HepG2 (cell line): ENCODE measurements at regions of chr15 and their contacts with region 1.

Region 1: GRCh38 chr15:98823012-98823458 is 174.7 kb downstream of the IGF1R start:
- DNase-seq: no peak
- ATAC-seq: no peak
- H3K4me3 ChIP-seq: no peak overlapping the region
- H3K27ac ChIP-seq: no peak overlapping the region
- H3K4me1 ChIP-seq: peaks cover 14% of the 10 kb centered on the region
- H3K27me3 ChIP-seq: no peaks in the 10 kb centered on the region
- CTCF ChIP-seq: no peak
- EP300 ChIP-seq: no peak
- POLR2A ChIP-seq: no peak
- RAD21 ChIP-seq: no peak

Region 2: GRCh38 chr15:98599909-98600691 is 222.9 kb before region 1 on chr15:
- CTCF ChIA-PET with region 1: no interaction called
- POLR2A ChIA-PET with region 1: no interaction called
- in situ Hi-C with region 1: no loop called
- intact Hi-C with region 1: no loop called
- DNase-seq: no peak
- ATAC-seq: peak; percentile 74
- H3K4me3 ChIP-seq: peak overlapping the region; percentile 61 to 80 (median 65)
- H3K27ac ChIP-seq: no peak overlapping the region
- H3K4me1 ChIP-seq: peaks cover 9% of the 10 kb centered on the region; the same call in 1 of the 2 replicates
- H3K27me3 ChIP-seq: peaks cover 3 to 45% of the 10 kb centered on the region in 2 experiments; a peak in 4 of 5 replicates
- CTCF ChIP-seq: no peak
- EP300 ChIP-seq: no peak
- POLR2A ChIP-seq: no peak
- RAD21 ChIP-seq: no peak

Region 3: GRCh38 chr15:98838397-98839259 is 15.6 kb after region 1 on chr15:
- CTCF ChIA-PET with region 1: no interaction called
- POLR2A ChIA-PET with region 1: no interaction called
- in situ Hi-C with region 1: no loop called
- intact Hi-C with region 1: loop called (anchors 1 kb)
- DNase-seq: no peak
- ATAC-seq: no peak
- H3K4me3 ChIP-seq: no peak overlapping the region
- H3K27ac ChIP-seq: no peak overlapping the region
- H3K4me1 ChIP-seq: peaks cover 44% of the 10 kb centered on the region
- H3K27me3 ChIP-seq: no peaks in the 10 kb centered on the region
- CTCF ChIP-seq: no peak
- EP300 ChIP-seq: no peak
- POLR2A ChIP-seq: no peak
- RAD21 ChIP-seq: no peak